A673 (cell line): ENCODE measurements at regions of chr1 and their contacts with region 1.

Region 1: DNA sequence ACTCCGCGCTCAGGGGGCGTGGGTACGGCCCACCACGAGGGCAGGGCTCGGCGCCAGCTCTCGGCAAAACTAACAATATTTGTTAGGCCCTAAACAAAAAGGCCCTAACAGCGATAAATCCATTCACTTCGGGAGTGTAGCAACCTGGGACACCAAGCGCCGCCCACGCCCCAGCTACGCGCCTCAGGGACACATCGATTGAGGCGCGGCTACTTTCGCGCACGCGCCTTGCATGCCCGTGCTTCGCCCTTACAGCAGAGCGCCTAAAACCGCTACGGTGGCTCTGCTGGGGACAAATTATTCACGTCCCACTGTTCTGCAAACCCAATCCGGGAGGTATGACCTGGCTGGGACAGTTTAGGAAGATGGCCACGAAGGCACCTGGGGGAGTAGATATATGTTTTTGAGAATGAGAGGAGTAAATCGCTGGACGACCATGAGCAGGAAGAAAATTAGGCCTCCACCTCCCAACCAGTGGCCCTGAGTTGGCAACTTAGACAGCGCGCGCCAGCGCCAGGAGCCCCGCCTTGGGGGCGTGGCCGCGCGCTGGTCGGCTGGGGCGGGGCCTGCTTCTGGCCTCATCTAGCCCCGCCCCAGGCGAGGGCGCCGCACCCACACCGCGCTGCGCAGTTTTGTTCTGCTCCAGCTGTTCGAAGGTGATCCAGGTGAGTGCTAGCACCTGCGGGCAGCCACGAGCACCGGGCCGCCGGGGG is at the start of gene MGST3:
- DNase-seq: peak; percentile 99
- H3K4me3 ChIP-seq: peak within 1 kb of the TSS; percentile 76
- H3K27ac ChIP-seq: peak within 1 kb of the TSS; percentile 85
- H3K4me1 ChIP-seq: peaks cover 29% of the 10 kb centered on the region
- H3K27me3 ChIP-seq: no peaks in the 10 kb centered on the region
- CTCF ChIP-seq: no peak
- total RNA-seq, gene MGST3: 150 and 155 TPM in 2 replicates

Region 2: GRCh38 chr1:165697881-165698760 is 67.3 kb after region 1 on chr1 and contains the start of gene ALDH9A1:
- CTCF ChIA-PET with region 1: no interaction called
- POLR2A ChIA-PET with region 1: no interaction called
- intact Hi-C with region 1: loop called (anchors 2 kb)
- DNase-seq: peak; percentile 94
- H3K4me3 ChIP-seq: peak within 1 kb of the TSS; percentile 81
- H3K27ac ChIP-seq: peak within 1 kb of the TSS; percentile 97
- H3K4me1 ChIP-seq: peaks cover 26% of the 10 kb centered on the region
- H3K27me3 ChIP-seq: no peaks in the 10 kb centered on the region
- CTCF ChIP-seq: peak; percentile 48
- total RNA-seq, gene ALDH9A1: 81.7 and 83.0 TPM in 2 replicates

Region 3: GRCh38 chr1:165768513-165769394 is 138.0 kb after region 1 on chr1 and contains the start of gene TMCO1:
- CTCF ChIA-PET with region 1: no interaction called
- POLR2A ChIA-PET with region 1: no interaction called
- intact Hi-C with region 1: loop called (anchors 10 kb)
- DNase-seq: peak; percentile 99
- H3K4me3 ChIP-seq: peak within 1 kb of the TSS; percentile 85
- H3K27ac ChIP-seq: peak within 1 kb of the TSS; percentile 95
- H3K4me1 ChIP-seq: peaks cover 6% of the 10 kb centered on the region
- H3K27me3 ChIP-seq: no peaks in the 10 kb centered on the region
- CTCF ChIP-seq: no peak
- total RNA-seq, gene TMCO1: 95.7 and 116 TPM in 2 replicates

Region 4: DNA sequence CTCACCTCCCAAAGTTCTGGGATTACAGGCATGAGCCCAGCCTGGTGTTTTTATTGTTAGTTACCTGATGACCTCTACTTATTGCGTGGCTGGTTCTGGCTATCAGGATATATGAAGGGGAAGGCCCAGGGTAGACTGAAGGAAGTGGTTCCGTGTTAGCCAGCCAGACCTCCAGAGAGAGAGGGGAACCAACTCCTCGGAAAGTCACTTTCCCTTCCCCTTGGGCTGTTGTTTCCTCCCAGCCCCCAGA is 1996.8 kb after region 1 on chr1:
- CTCF ChIA-PET with region 1: no interaction called
- POLR2A ChIA-PET with region 1: interaction called, 17 read pairs
- intact Hi-C with region 1: no loop called
- DNase-seq: no peak
- H3K4me3 ChIP-seq: no peak overlapping the region
- H3K27ac ChIP-seq: no peak overlapping the region
- H3K4me1 ChIP-seq: no peaks in the 10 kb centered on the region
- H3K27me3 ChIP-seq: peaks cover 27% of the 10 kb centered on the region
- CTCF ChIP-seq: no peak